ENCODE measurements at regions of chr2 and their contacts with region 1.

Region 1: GRCh38 chr2:26456440-26457250 is 21.3 kb downstream of the OTOF start:
- DNase-seq: no peak
- ATAC-seq: no peak
- H3K4me3 ChIP-seq: no peak overlapping the region
- H3K27ac ChIP-seq: no peak overlapping the region
- H3K4me1 ChIP-seq: no peaks in the 10 kb centered on the region
- H3K27me3 ChIP-seq: no peaks in the 10 kb centered on the region
- CTCF ChIP-seq: no peak

Region 2: GRCh38 chr2:26401739-26402541 is 54.7 kb before region 1 on chr2 and contains the start of gene DRC1:
- CTCF ChIA-PET with region 1: interaction called, 11 read pairs
- POLR2A ChIA-PET with region 1: no interaction called
- in situ Hi-C with region 1: no loop called
- intact Hi-C with region 1: no loop called
- DNase-seq: no peak
- ATAC-seq: peak; percentile 90
- H3K4me3 ChIP-seq: peak within 1 kb of the TSS; percentile 29 to 44
- H3K27ac ChIP-seq: no peak within 1 kb of the TSS
- H3K4me1 ChIP-seq: no peaks in the 10 kb centered on the region
- H3K27me3 ChIP-seq: no peaks in the 10 kb centered on the region
- CTCF ChIP-seq: no peak
- total RNA-seq, gene DRC1: 0.18 TPM

Measured in Panc1 (cell line).